AG04450 (cell line): ENCODE measurements at regions of chr11 and their contacts with region 1.

Region 1: GRCh38 chr11:9506489-9507276 is 45.9 kb downstream of the ZNF143 start:
- DNase-seq: peak; percentile 39
- H3K4me3 ChIP-seq: no peak overlapping the region
- H3K27ac ChIP-seq: no peak overlapping the region
- H3K27me3 ChIP-seq: no peaks in the 10 kb centered on the region
- CTCF ChIP-seq: peak; percentile 96

Region 2: GRCh38 chr11:9015677-9016076 is 491.0 kb before region 1 on chr11:
- CTCF ChIA-PET with region 1: interaction called, 25 read pairs
- POLR2A ChIA-PET with region 1: no interaction called
- DNase-seq: peak; percentile 53
- H3K4me3 ChIP-seq: no peak overlapping the region
- H3K27ac ChIP-seq: no peak overlapping the region
- H3K27me3 ChIP-seq: no peaks in the 10 kb centered on the region
- CTCF ChIP-seq: peak; percentile 81

Region 3: GRCh38 chr11:9170450-9170849 is 336.2 kb before region 1 on chr11:
- CTCF ChIA-PET with region 1: interaction called, 13 read pairs
- POLR2A ChIA-PET with region 1: no interaction called
- DNase-seq: peak; percentile 26
- H3K4me3 ChIP-seq: no peak overlapping the region
- H3K27ac ChIP-seq: no peak overlapping the region
- H3K27me3 ChIP-seq: no peaks in the 10 kb centered on the region
- CTCF ChIP-seq: no peak

Region 4: GRCh38 chr11:9460322-9461067 is 46.2 kb before region 1 on chr11 and contains the start of gene ZNF143:
- CTCF ChIA-PET with region 1: interaction called, 7 read pairs
- POLR2A ChIA-PET with region 1: interaction called, 15 read pairs
- DNase-seq: peak; percentile 100
- H3K4me3 ChIP-seq: peak within 1 kb of the TSS; percentile 97
- H3K27ac ChIP-seq: peak within 1 kb of the TSS; percentile 99
- H3K27me3 ChIP-seq: no peaks in the 10 kb centered on the region
- CTCF ChIP-seq: no peak
- polyA plus RNA-seq, gene ZNF143: 29.1 and 29.4 TPM in 2 replicates

Region 5: DNA sequence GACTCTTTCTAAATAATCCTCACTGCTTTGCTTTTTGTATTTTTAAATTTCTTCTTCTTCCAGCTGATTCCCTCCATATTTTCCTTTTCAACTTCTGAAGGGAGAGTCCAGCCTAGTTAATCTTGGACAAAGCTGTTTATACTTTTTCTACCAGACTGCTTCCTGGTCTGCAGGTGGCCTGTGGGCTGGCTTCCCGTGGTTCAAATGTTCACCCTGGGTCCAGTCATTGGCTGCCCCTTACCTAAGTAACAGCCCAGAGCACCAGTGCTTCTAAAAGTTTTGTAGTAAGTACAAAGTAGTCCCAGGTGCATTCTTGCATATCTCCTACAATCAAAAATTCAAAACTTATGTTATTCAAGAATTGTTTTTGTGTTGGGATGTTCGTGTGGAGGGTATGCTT is 26.8 kb before region 1 on chr11:
- CTCF ChIA-PET with region 1: interaction called, 20 read pairs
- POLR2A ChIA-PET with region 1: no interaction called
- DNase-seq: no peak
- H3K4me3 ChIP-seq: no peak overlapping the region
- H3K27ac ChIP-seq: no peak overlapping the region
- H3K27me3 ChIP-seq: no peaks in the 10 kb centered on the region
- CTCF ChIP-seq: no peak

Region 6: GRCh38 chr11:9527481-9528140 is 20.9 kb after region 1 on chr11:
- CTCF ChIA-PET with region 1: interaction called, 27 read pairs
- POLR2A ChIA-PET with region 1: no interaction called
- DNase-seq: peak; percentile 13
- H3K4me3 ChIP-seq: no peak overlapping the region
- H3K27ac ChIP-seq: peak overlapping the region; percentile 66
- H3K27me3 ChIP-seq: no peaks in the 10 kb centered on the region
- CTCF ChIP-seq: no peak

Region 7: DNA sequence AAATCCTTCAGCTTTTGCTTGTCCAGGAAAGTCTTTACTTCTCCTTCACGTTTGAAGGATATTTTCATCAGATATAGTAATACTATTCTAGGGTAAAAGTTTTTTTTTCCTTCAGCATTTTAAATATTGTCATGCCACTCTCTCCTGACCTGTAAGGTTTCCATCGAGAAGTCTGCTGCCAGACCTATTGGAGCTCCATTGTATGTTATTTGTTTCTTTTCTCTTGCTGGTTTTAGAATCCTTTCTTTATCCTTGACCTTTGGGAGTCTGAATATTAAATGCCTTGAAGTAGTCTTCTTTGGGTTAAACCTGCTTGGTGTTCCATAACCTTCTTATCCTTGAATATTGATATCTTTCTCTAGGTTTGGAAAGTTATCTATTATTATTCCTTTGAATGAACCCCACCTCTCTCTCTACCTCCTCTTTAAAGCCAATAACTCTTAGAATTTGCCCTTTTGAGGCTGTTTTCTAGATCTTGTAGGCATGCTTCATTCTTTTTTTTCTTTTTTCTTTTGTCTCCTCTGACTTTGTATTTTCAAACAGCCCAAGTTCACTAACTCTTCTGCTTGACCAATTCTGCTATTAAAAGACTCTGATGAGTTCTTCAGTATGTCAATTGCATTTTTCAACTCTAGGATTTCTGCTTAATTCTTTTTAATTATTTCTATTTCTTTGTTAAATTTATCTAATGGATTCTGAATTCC is 54.7 kb after region 1 on chr11:
- CTCF ChIA-PET with region 1: no interaction called
- POLR2A ChIA-PET with region 1: no interaction called
- DNase-seq: no peak
- H3K4me3 ChIP-seq: no peak overlapping the region
- H3K27ac ChIP-seq: no peak overlapping the region
- H3K27me3 ChIP-seq: no peaks in the 10 kb centered on the region
- CTCF ChIP-seq: no peak

Region 8: DNA sequence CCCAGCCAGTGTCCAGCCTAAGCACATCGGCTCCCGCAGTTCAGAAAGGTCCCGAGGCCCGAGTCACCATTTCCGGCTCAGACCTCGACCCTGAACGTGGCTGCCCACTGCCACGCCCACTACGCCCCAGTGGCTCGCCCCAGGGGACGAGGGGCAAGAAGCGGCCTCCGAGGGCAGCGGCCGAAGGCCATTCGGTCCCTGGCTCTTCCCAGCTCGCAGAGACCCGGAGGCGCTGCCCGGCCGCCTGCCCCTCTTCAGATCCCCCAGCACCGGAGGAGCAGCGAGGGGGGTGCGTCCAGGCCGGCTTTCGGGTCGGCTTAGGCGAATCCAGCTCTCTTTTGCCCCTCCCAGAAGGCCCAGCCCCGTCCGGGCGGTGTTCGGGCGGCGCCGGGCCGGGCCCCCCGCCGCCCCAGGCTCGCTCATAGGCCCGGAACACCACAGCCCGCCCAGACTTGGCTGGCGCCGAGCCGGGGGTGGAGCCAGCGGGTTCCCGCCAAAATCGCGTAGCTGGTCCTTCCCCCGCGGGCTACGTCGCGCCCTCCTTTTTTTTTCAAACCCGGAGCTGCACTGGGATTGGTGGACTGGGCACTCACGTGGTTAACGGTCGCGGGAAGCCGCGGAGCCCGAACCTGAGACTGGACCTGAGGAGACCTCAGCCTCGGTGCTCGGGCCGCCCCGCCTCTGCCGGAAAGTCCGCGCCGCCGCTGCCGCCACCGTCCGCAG is 66.5 kb after region 1 on chr11 and contains the start of gene WEE1:
- CTCF ChIA-PET with region 1: interaction called, 11 read pairs
- POLR2A ChIA-PET with region 1: interaction called, 3 read pairs
- DNase-seq: peak; percentile 95
- H3K4me3 ChIP-seq: peak within 1 kb of the TSS; percentile 82
- H3K27ac ChIP-seq: peak within 1 kb of the TSS; percentile 97
- H3K27me3 ChIP-seq: no peaks in the 10 kb centered on the region
- CTCF ChIP-seq: no peak
- polyA plus RNA-seq, gene WEE1: 27.2 and 44.8 TPM in 2 replicates